Naive thymus-derived CD4-positive, alpha-beta T cell (primary cell): ENCODE measurements at regions of chr12 and their contacts with region 1.

Region 1: GRCh38 chr12:47296828-47297227 is 217.1 kb upstream of the AMIGO2 start:
- DNase-seq: no peak
- ATAC-seq: no peak
- H3K4me3 ChIP-seq: no peak overlapping the region
- H3K4me3 Mint-ChIP-seq: no peak overlapping the region
- H3K27ac ChIP-seq: no peak overlapping the region
- H3K27ac Mint-ChIP-seq: peak overlapping the region in 4 of 9 donors; percentile 25 to 75 (median 34)
- H3K4me1 ChIP-seq: peaks cover 15 to 30% of the 10 kb centered on the region in 2 donors
- H3K4me1 Mint-ChIP-seq: peaks cover 23 to 61% (median 55%) of the 10 kb centered on the region in 7 donors
- H3K27me3 ChIP-seq: no peaks in the 10 kb centered on the region
- H3K27me3 Mint-ChIP-seq: no peaks in the 10 kb centered on the region

Region 2: GRCh38 chr12:47102845-47103651 is 193.8 kb before region 1 on chr12:
- CTCF ChIA-PET with region 1: no interaction called
- POLR2A ChIA-PET with region 1: no interaction called
- intact Hi-C with region 1: no loop called
- DNase-seq: no peak
- ATAC-seq: no peak
- H3K4me3 ChIP-seq: no peak overlapping the region
- H3K4me3 Mint-ChIP-seq: no peak overlapping the region
- H3K27ac ChIP-seq: no peak overlapping the region
- H3K27ac Mint-ChIP-seq: peak overlapping the region in 1 of 9 donors; percentile 11
- H3K4me1 ChIP-seq: no peaks in the 10 kb centered on the region
- H3K4me1 Mint-ChIP-seq: peaks cover 0 to 9% (median 0%) of the 10 kb centered on the region in 7 donors
- H3K27me3 ChIP-seq: no peaks in the 10 kb centered on the region
- H3K27me3 Mint-ChIP-seq: no peaks in the 10 kb centered on the region

Region 3: DNA sequence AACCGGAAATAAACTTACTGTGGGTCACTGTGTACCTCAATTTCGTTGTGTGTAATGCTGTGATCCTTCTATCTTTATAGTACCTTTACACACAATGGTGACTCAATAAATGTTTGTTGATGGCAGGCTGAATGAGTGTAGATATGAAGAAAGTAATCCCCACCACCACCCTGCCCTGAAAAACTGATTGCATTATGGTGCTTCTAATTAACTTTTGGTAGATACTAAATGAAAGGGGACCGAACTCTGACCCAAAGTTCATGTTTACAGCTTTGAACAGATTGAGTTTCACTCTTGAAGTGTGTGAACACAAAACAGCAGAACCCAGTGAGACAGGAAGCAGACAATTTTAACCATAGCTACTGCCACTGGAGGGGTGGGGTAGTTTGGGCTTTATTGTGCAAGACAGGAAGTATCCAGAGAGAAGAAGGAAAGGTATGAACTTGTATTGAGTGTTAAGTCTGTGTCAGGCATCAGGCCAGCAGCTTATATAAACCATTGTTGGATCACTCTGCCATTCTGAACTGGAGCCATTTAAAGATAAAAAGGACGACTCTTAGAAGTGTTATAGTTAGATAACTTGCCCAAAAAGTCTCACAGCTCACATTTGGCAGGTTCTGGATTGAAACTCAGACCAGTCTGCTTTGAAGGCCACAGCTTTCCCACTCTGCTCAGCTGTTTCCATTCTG is 20.1 kb before region 1 on chr12:
- CTCF ChIA-PET with region 1: interaction called, 6 read pairs
- POLR2A ChIA-PET with region 1: interaction called, 19 read pairs
- intact Hi-C with region 1: no loop called
- DNase-seq: peak; percentile 12 to 89 (median 84)
- ATAC-seq: peak; percentile 97
- H3K4me3 ChIP-seq: peak overlapping the region; percentile 31
- H3K4me3 Mint-ChIP-seq: peak overlapping the region; percentile 51 to 83 (median 74)
- H3K27ac ChIP-seq: peak overlapping the region; percentile 69
- H3K27ac Mint-ChIP-seq: peak overlapping the region; percentile 90 to 98 (median 92)
- H3K4me1 ChIP-seq: peaks cover 28 to 73% of the 10 kb centered on the region in 2 donors
- H3K4me1 Mint-ChIP-seq: peaks cover 42 to 97% (median 90%) of the 10 kb centered on the region in 7 donors
- H3K27me3 ChIP-seq: no peaks in the 10 kb centered on the region
- H3K27me3 Mint-ChIP-seq: no peaks in the 10 kb centered on the region

Region 4: GRCh38 chr12:47377414-47378221 is 80.8 kb after region 1 on chr12:
- CTCF ChIA-PET with region 1: no interaction called
- POLR2A ChIA-PET with region 1: no interaction called
- intact Hi-C with region 1: no loop called
- DNase-seq: no peak
- ATAC-seq: no peak
- H3K4me3 ChIP-seq: no peak overlapping the region
- H3K4me3 Mint-ChIP-seq: peak overlapping the region in 3 of 10 donors; percentile 4 to 28 (median 8)
- H3K27ac ChIP-seq: no peak overlapping the region
- H3K27ac Mint-ChIP-seq: peak overlapping the region in 6 of 9 donors; percentile 24 to 81 (median 58)
- H3K4me1 ChIP-seq: peaks cover 1 to 7% of the 10 kb centered on the region in 2 donors
- H3K4me1 Mint-ChIP-seq: peaks cover 16 to 57% (median 38%) of the 10 kb centered on the region in 7 donors
- H3K27me3 ChIP-seq: no peaks in the 10 kb centered on the region
- H3K27me3 Mint-ChIP-seq: no peaks in the 10 kb centered on the region

Region 5: GRCh38 chr12:47758834-47759690 is 462.2 kb after region 1 on chr12 and contains the start of gene RAPGEF3:
- CTCF ChIA-PET with region 1: no interaction called
- POLR2A ChIA-PET with region 1: no interaction called
- intact Hi-C with region 1: no loop called
- DNase-seq: peak; percentile 47 to 81 (median 60)
- ATAC-seq: peak; percentile 91
- H3K4me3 ChIP-seq: peak within 1 kb of the TSS; percentile 66
- H3K4me3 Mint-ChIP-seq: peak within 1 kb of the TSS; percentile 61 to 85 (median 80)
- H3K27ac ChIP-seq: peak within 1 kb of the TSS; percentile 27
- H3K27ac Mint-ChIP-seq: peak within 1 kb of the TSS in 4 of 9 donors; percentile 29 to 55 (median 47)
- H3K4me1 ChIP-seq: peaks cover 9 to 11% of the 10 kb centered on the region in 2 donors
- H3K4me1 Mint-ChIP-seq: peaks cover 0 to 23% (median 9%) of the 10 kb centered on the region in 7 donors
- H3K27me3 ChIP-seq: no peaks in the 10 kb centered on the region
- H3K27me3 Mint-ChIP-seq: peaks cover 0 to 5% (median 0%) of the 10 kb centered on the region in 5 donors
- total RNA-seq, gene RAPGEF3: 0.08 to 1.9 (median 1.1) TPM in 4 of 5 experiments, not detected in the other